Activated T-helper 2 cell treated with anti-CD3 and anti-CD28 coated beads, Interferon-gamma antibody, Interleukin-2, Interleukin-4, amounts not matched to agents 10 μg/mL and 5 μg/mL and 100 μg/mL, durations not matched to agents 14 hours and 24 hours and 36 hours (primary cell): ENCODE measurements at regions of chr5 and their contacts with region 1.

Region 1: DNA sequence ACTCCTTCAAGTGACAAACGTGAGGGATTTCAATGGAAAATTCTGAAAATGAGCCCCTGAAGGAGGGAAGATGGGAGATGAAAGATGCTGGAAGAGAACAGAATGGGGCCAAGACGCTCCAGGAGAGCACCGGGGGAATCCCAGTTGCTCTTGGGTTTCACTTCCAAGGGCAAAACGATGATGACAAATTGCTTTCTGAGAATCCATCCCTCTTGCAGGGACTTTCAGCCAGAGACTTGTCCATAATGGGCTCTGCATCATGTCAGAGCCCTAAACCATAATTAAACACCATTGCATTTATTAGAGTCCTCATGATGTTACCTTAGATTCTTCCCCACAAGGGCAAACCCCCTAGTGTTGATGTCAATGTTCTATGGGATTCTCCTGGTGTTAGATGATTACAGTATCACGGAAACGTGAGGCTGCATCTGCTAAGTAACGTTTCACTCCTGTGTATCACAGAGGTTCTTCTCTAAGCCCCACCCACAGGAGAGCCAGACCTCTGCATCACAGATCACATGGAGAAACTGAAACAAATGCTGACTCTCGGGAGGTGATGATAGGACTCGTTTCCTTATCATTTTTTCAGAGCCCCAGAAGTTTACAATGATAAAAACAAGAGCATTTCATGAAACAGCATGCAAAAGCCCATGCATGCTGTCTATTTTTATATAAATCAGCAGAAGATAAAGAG is 114.4 kb downstream of the TENT4A start:
- DNase-seq: peak; percentile 51
- H3K4me3 Mint-ChIP-seq: peak overlapping the region; percentile 74
- H3K27ac Mint-ChIP-seq: peak overlapping the region; percentile 93
- H3K4me1 Mint-ChIP-seq: peaks cover 61% of the 10 kb centered on the region
- H3K27me3 Mint-ChIP-seq: peaks cover 10% of the 10 kb centered on the region

Region 2: GRCh38 chr5:6261668-6262067 is 566.0 kb before region 1 on chr5:
- intact Hi-C with region 1: loop called (anchors 5 kb)
- DNase-seq: no peak
- H3K4me3 Mint-ChIP-seq: peak overlapping the region; percentile 65
- H3K27ac Mint-ChIP-seq: peak overlapping the region; percentile 81
- H3K4me1 Mint-ChIP-seq: peaks cover 23% of the 10 kb centered on the region
- H3K27me3 Mint-ChIP-seq: no peaks in the 10 kb centered on the region

Region 3: GRCh38 chr5:6849316-6850105 is 21.8 kb after region 1 on chr5:
- intact Hi-C with region 1: loop called (anchors 2 kb)
- DNase-seq: no peak
- H3K4me3 Mint-ChIP-seq: no peak overlapping the region
- H3K27ac Mint-ChIP-seq: no peak overlapping the region
- H3K4me1 Mint-ChIP-seq: peaks cover 12% of the 10 kb centered on the region
- H3K27me3 Mint-ChIP-seq: no peaks in the 10 kb centered on the region

Region 4: GRCh38 chr5:6950860-6951259 is 123.2 kb after region 1 on chr5:
- intact Hi-C with region 1: no loop called
- DNase-seq: no peak
- H3K4me3 Mint-ChIP-seq: no peak overlapping the region
- H3K27ac Mint-ChIP-seq: no peak overlapping the region
- H3K4me1 Mint-ChIP-seq: no peaks in the 10 kb centered on the region
- H3K27me3 Mint-ChIP-seq: peaks cover 1% of the 10 kb centered on the region

Region 5: GRCh38 chr5:7000310-7000709 is 172.6 kb after region 1 on chr5:
- intact Hi-C with region 1: loop called (anchors 5 kb)
- DNase-seq: no peak
- H3K4me3 Mint-ChIP-seq: no peak overlapping the region
- H3K27ac Mint-ChIP-seq: no peak overlapping the region
- H3K4me1 Mint-ChIP-seq: peaks cover 3% of the 10 kb centered on the region
- H3K27me3 Mint-ChIP-seq: no peaks in the 10 kb centered on the region